ENCODE measurements at regions of chr1 and their contacts with region 1.

Region 1: GRCh38 chr1:178238722-178239510 is 145.0 kb downstream of the RASAL2 start:
- DNase-seq: peak; percentile 51 to 100
- H3K4me3 ChIP-seq: peak overlapping the region; percentile 5; the same call in 1 of the 2 replicates
- H3K27ac ChIP-seq: peak overlapping the region; percentile 97
- H3K4me1 ChIP-seq: peaks cover 58% of the 10 kb centered on the region
- H3K27me3 ChIP-seq: no peaks in the 10 kb centered on the region
- CTCF ChIP-seq: no peak

Region 2: GRCh38 chr1:178055779-178056471 is 183.0 kb before region 1 on chr1:
- CTCF ChIA-PET with region 1: interaction called, 4 read pairs
- POLR2A ChIA-PET with region 1: interaction called, 7 read pairs
- intact Hi-C with region 1: loop called (anchors 1 kb)
- DNase-seq: peak in 1 of 2 experiments; percentile 37
- H3K4me3 ChIP-seq: no peak overlapping the region
- H3K27ac ChIP-seq: no peak overlapping the region
- H3K4me1 ChIP-seq: peaks cover 49% of the 10 kb centered on the region
- H3K27me3 ChIP-seq: no peaks in the 10 kb centered on the region
- CTCF ChIP-seq: no peak

Region 3: GRCh38 chr1:178126790-178127189 is 112.1 kb before region 1 on chr1:
- CTCF ChIA-PET with region 1: no interaction called
- POLR2A ChIA-PET with region 1: interaction called, 4 read pairs
- intact Hi-C with region 1: loop called (anchors 2 kb)
- DNase-seq: peak; percentile 55 to 92
- H3K4me3 ChIP-seq: peak overlapping the region; percentile 9; the same call in 1 of the 2 replicates
- H3K27ac ChIP-seq: peak overlapping the region; percentile 90
- H3K4me1 ChIP-seq: peaks cover 45% of the 10 kb centered on the region
- H3K27me3 ChIP-seq: no peaks in the 10 kb centered on the region
- CTCF ChIP-seq: no peak

Region 4: DNA sequence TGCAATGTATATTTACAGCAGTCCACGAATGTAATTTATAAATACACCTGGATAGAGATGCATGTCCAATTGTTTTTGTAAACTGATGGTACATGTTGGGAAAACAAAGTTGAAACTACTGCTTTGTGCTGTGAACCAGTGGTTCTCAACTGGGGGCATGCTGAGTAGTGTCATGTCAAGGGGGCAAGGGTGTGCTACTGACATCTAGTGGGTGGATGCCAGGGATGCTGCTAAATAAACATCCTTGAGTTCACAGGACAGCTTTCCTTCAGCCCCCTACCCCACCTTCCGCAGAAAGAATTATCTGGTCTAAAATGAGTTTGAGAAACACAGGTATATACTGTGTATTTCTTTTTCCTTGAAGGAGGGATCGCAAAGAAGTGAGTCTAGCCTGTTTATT is 49.1 kb before region 1 on chr1:
- CTCF ChIA-PET with region 1: no interaction called
- POLR2A ChIA-PET with region 1: interaction called, 10 read pairs
- intact Hi-C with region 1: loop called (anchors 2 kb)
- DNase-seq: no peak
- H3K4me3 ChIP-seq: no peak overlapping the region
- H3K27ac ChIP-seq: no peak overlapping the region
- H3K4me1 ChIP-seq: peaks cover 8% of the 10 kb centered on the region; the same call in 1 of the 2 replicates
- H3K27me3 ChIP-seq: no peaks in the 10 kb centered on the region
- CTCF ChIP-seq: peak; percentile 52

Region 5: DNA sequence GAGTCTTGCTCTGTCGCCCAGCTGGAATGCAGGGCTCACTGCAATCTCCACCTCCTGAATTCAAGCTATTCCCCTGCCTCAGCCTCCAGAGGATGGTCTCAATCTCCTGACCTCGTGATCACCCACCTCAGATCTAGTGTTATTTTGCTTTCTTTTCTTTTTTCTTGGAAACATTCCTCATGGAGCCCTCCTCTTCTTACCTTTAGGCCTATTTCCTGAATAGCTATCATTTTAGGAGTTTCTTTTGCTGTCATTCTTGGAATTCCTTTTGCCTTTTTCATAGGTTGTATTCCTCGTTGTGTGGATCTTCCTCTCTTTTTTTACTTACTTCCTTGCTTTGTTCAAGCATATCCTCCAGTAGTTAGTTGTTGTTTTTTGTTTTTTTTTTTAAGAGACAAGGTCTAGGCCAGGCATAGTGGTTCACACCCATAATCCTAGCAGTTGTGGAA is 28.8 kb after region 1 on chr1:
- CTCF ChIA-PET with region 1: no interaction called
- POLR2A ChIA-PET with region 1: interaction called, 5 read pairs
- intact Hi-C with region 1: loop called (anchors 1 kb)
- DNase-seq: peak; percentile 66 to 90
- H3K4me3 ChIP-seq: no peak overlapping the region
- H3K27ac ChIP-seq: peak overlapping the region; percentile 78
- H3K4me1 ChIP-seq: peaks cover 29% of the 10 kb centered on the region
- H3K27me3 ChIP-seq: no peaks in the 10 kb centered on the region
- CTCF ChIP-seq: no peak

Region 6: GRCh38 chr1:178361841-178362240 is 122.9 kb after region 1 on chr1:
- CTCF ChIA-PET with region 1: no interaction called
- POLR2A ChIA-PET with region 1: no interaction called
- intact Hi-C with region 1: no loop called
- DNase-seq: no peak
- H3K4me3 ChIP-seq: no peak overlapping the region
- H3K27ac ChIP-seq: no peak overlapping the region
- H3K4me1 ChIP-seq: no peaks in the 10 kb centered on the region; the same call in 1 of the 2 replicates
- H3K27me3 ChIP-seq: no peaks in the 10 kb centered on the region
- CTCF ChIP-seq: no peak

Region 7: DNA sequence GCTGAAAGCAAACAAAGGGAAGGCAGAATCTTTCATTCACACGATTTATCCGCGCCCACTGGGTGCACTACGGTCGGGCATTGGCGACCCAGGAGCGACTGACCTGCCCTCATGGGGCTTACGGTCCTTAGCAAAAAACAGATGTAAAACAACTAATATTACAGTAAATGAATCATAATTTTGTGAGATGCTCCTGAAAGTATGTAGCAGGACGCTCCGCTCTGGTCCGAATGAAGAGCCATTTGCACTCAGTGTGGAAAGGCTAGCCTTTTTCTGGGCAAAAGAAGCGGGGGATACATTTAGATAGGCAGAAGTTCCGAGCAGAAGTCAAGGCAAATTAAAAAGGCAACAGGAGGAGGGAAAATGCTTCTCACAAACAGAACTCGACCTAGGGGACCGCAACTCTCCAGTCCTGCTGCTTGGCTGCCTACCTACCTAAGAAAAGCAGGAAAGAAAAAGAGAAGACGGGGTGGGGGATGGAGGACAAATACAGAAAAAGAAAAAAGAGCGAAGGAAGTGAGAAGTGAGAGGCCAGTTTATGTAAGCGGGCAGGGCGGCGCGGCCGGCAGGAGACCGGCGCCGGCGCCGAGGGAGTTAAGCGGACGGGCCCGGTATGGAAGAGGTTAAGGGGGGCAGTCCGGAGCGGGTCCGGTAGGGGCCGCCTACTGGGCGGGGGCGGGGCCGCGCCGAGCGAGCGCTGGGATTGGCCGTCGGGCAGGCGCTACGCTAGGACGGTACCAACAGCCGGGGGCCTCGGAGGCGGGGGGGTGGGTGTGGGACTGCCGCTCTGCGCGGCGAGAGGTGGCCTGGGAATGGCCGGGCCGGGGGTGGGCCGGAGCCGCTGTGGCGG is 786.4 kb after region 1 on chr1 and contains the start of gene FAM20B:
- CTCF ChIA-PET with region 1: no interaction called
- POLR2A ChIA-PET with region 1: interaction called, 34 read pairs
- intact Hi-C with region 1: no loop called
- DNase-seq: peak; percentile 81 to 94
- H3K4me3 ChIP-seq: peak within 1 kb of the TSS; percentile 93
- H3K27ac ChIP-seq: peak within 1 kb of the TSS; percentile 98
- H3K4me1 ChIP-seq: peaks cover 37% of the 10 kb centered on the region
- H3K27me3 ChIP-seq: no peaks in the 10 kb centered on the region
- CTCF ChIP-seq: no peak
- total RNA-seq, gene FAM20B: 68.1 and 80.5 TPM in 2 replicates

Region 8: DNA sequence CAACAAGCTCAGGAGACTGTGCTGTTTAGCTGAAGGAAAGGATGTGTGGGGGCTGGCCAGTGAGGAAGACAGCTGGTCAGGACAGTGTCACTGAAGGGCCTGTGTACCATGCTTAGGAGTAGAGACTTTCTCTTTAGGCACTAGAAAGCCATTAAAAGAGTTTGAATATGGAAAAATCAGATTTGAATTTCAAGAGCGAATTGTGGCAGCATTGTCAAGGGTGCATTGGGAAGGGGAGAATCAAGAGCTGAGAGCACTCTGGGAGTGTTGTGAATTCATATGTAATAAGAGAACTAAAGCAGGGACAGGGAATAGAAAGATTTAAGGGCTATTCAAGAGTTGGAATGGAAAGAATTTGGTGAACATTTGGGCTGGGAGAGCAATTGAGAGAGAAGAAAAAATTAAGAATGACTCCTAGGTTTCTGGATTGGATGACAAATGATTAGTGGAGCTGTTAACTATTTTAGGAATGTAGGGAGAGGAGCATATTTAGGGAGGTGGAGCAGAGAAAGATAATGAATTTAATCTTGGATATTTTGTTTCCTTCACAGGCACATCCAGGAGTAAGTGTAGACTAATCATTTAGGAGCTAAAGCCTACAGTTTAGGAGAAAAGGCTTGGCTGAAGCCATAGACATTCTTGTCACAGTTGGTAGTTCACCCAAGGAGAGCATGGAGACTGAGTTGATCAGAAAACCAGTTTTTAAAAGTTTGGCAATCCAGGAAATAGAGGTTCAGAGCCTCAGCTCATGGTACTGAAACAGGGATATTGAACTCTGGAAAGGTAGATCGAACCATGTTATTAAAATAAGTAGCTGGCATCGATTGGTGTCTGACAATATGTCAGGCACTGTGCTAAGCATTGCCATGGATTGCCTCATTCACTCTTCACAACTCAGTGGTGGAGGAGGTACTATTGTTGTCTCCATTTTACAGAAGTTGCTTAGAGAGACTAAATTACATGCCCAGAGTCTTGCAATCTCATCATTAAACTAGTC is 819.9 kb after region 1 on chr1:
- CTCF ChIA-PET with region 1: no interaction called
- POLR2A ChIA-PET with region 1: interaction called, 20 read pairs
- intact Hi-C with region 1: no loop called
- DNase-seq: peak in 1 of 2 experiments; percentile 67
- H3K4me3 ChIP-seq: no peak overlapping the region
- H3K27ac ChIP-seq: peak overlapping the region; percentile 96
- H3K4me1 ChIP-seq: peaks cover 54% of the 10 kb centered on the region
- H3K27me3 ChIP-seq: no peaks in the 10 kb centered on the region
- CTCF ChIP-seq: no peak

Measured in PC-9 (cell line).